ENCODE measurements at regions of chr16 and their contacts with region 1.

Region 1: DNA sequence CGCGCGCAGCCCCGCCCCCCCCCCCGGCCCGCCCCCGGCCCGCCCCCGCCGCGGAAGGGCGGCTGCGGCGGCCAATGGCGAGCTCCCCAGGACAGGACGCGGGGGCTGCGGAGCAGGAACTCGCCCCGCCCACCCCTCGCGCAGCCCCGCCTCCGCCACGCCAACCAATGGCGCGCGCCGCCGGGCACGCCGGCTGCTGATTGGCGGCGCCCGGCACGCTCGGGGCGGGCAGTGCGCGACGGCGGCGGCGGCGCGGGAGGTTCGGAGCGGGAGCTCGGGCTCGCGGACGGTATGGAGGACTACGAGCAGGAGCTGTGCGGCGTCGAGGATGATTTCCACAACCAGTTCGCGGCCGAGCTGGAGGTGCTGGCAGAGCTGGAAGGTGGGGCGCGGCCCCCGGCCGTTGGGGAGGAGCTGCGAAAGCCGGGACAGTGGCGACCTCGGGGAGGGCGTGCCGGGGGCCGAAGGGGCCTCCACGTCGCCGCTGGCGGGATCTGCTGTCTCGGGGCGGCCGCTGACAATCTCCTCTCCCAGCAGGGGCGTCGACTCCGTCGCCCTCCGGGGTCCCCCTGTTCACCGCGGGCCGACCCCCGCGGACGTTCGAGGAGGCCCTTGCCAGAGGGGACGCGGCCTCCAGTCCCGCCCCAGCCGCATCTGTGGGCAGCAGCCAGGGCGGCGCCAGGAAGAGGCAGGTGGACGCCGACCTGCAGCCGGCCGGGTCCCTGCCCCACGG is at the start of gene CHTF18:
- DNase-seq: peak; percentile 99

Region 2: GRCh38 chr16:714558-715476 is 73.7 kb before region 1 on chr16 and contains the start of gene METRN:
- CTCF ChIA-PET with region 1: interaction called, 9 read pairs
- POLR2A ChIA-PET with region 1: interaction called, 34 read pairs
- DNase-seq: peak; percentile 85

Region 3: DNA sequence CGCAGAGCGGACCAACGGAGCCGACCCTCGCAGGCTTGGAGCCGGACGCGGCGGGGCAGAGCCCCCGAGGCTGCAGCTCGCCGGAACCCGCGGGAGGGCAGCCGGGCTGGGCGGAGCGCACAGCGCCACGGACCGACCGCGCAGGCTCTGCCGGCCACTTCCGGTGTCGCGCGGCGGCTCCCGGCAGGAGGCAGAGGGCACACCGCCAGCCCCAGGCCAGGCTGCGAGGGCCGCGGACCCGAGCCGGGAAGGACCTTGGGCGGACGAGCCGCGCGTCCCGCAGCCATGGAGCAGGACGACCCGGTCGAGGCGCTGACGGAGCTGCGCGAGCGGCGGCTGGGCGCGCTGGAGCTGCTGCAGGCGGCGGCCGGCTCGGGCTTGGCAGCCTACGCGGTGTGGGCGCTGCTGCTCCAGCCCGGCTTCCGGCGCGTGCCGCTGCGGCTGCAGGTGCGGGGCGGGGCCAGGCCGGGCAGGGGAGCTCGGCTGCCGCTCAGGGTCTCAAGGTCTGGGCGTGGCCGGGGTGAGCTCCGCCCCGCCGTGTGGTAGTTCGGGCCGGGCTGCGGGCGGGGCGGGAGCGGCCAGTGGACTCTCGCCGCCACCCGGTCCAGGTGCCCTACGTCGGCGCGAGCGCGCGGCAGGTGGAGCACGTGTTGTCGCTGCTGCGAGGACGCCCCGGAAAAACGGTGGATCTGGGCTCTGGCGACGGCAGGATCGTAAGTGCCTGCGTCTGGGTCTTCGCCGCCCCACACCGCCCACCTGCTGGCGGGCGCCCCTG is 67.4 kb before region 1 on chr16 and contains the start of gene ANTKMT:
- CTCF ChIA-PET with region 1: interaction called, 9 read pairs
- POLR2A ChIA-PET with region 1: interaction called, 34 read pairs
- DNase-seq: peak; percentile 89

Region 4: GRCh38 chr16:799948-800833 is 11.6 kb after region 1 on chr16 and contains the start of gene GNG13:
- CTCF ChIA-PET with region 1: no interaction called
- POLR2A ChIA-PET with region 1: interaction called, 31 read pairs
- DNase-seq: no peak